ENCODE measurements at regions of chr16 and their contacts with region 1.

Region 1: DNA sequence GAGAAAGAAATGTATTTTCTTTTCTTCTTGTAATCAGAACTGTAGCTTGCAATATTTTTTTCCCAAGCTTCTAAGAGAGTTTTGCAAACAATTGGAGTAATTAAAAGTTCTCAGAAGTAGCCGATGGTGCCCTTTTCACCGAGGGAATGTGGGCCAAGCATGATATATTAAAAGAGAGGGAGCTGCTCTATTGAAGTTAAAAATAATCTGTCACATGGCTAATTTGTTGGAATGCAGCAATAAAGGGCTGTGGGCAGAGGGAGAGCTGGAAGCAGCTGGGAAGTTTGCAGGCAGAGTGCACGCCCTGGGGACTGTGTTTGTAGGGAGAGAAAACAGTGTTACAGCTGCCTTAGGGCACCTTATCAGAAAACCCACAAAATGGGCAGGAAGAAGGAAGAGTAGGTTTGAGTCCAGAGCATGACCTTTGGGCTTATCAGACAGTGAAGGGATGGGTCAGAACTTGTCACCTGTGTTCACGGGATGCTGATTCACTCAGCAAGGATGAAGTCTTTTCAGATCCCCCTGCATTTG is 18.5 kb upstream of the TERF2 start:
- H3K4me3 Mint-ChIP-seq: no peak overlapping the region
- H3K27ac Mint-ChIP-seq: no peak overlapping the region
- H3K4me1 Mint-ChIP-seq: peaks cover 23% of the 10 kb centered on the region
- H3K27me3 Mint-ChIP-seq: peaks cover 43% of the 10 kb centered on the region

Region 2: GRCh38 chr16:69019811-69020210 is 384.5 kb before region 1 on chr16:
- intact Hi-C with region 1: no loop called
- H3K4me3 Mint-ChIP-seq: no peak overlapping the region
- H3K27ac Mint-ChIP-seq: no peak overlapping the region
- H3K4me1 Mint-ChIP-seq: peaks cover 8% of the 10 kb centered on the region
- H3K27me3 Mint-ChIP-seq: no peaks in the 10 kb centered on the region

Region 3: DNA sequence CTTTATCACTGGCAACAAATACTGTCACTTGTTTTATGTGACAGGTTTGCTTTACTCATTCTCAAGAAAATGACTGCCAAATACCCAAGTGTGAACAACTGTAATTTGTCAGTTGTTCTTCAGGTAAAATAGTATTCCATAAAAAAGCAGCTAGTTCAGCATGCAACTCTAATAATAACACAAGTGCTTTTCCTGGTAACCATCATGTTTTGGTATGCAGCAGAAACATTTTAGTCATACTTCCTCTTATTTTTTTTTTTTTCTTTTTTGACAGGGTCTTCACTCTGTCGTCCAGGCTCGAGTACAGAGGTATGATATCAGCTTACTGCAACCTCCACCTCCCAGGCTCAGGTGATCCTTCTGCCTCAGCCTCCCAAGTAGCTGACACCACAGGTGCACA is 23.1 kb before region 1 on chr16:
- intact Hi-C with region 1: no loop called
- H3K4me3 Mint-ChIP-seq: peak overlapping the region; percentile 54
- H3K27ac Mint-ChIP-seq: peak overlapping the region; percentile 89
- H3K4me1 Mint-ChIP-seq: peaks cover 32% of the 10 kb centered on the region
- H3K27me3 Mint-ChIP-seq: no peaks in the 10 kb centered on the region

Region 4: DNA sequence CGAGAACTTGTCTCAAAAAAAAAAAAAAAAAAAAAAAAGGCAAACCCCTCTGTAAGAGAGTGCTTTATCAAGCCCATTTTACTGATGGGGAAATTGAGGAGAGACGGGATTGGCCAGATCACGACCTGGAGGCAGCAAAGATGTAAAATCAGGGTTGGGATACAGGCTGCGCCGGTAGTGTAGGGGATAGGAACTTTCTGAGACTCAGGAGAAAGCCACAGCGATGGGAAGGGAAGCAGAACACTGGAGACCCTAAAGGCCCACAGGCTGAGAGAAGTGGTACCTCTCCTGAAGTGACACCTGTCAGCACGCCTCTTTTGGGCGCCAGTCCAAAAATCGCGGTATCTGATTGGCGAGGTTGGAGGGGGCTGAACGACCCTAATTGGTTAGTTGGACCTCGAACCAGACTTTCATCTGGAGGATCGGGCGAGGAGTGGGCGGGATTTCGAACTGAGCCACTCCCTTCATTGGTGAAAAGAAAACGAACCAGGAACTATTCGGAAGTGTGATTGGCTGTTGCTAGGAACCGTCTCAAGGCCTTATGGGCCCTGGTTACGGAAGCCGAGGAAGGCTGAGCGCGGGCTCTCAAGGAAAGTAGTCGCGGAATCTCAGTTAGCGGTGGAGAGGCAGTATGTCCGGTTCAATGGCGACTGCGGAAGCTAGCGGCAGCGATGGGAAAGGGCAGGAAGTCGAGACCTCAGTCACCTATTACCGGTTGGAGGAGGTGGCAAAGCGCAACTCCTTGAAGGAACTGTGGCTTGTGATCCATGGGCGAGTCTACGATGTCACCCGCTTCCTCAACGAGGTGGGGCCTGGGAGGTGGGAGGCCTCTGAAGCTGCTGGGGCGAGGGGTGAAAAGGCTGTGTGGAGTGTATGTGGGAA is 20.0 kb after region 1 on chr16 and contains the start of gene CYB5B:
- intact Hi-C with region 1: loop called (anchors 1 kb)
- H3K4me3 Mint-ChIP-seq: peak within 1 kb of the TSS; percentile 99
- H3K27ac Mint-ChIP-seq: peak within 1 kb of the TSS; percentile 93
- H3K4me1 Mint-ChIP-seq: peaks cover 36% of the 10 kb centered on the region
- H3K27me3 Mint-ChIP-seq: no peaks in the 10 kb centered on the region

Region 5: DNA sequence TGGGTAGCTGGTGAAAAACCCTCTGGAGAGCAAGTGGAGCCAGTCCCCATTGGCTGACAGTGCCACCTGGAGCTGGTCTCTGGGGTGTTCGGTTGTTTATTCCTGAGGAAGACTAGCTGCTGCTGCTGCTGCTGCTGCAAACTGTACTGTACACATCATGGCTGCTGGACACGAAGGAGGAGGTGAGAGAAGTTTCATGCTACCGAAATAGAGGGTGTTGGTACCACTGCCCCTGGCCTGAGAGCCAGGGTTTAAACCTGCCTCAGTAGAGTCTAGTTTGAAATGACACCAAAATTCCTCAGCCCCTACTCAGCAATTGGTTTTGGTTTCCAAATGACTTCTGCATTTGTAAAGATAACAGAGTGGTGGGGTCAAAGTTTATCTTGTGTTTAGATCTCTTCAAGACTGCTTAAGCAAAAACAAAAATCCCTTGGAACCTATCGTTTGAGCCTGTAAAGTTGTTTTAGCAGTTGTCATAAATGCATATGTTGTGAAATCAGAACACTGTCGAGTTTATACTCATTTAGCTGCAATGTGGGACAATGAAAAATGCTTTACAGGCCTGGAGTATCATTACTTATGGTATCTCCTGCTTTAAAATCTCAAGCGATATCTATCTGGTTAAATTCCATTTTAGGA is 60.9 kb after region 1 on chr16:
- intact Hi-C with region 1: loop called (anchors 10 kb)
- H3K4me3 Mint-ChIP-seq: no peak overlapping the region
- H3K27ac Mint-ChIP-seq: no peak overlapping the region
- H3K4me1 Mint-ChIP-seq: peaks cover 34% of the 10 kb centered on the region
- H3K27me3 Mint-ChIP-seq: peaks cover 70% of the 10 kb centered on the region

Region 6: GRCh38 chr16:69494993-69495392 is 90.7 kb after region 1 on chr16:
- intact Hi-C with region 1: no loop called
- H3K4me3 Mint-ChIP-seq: no peak overlapping the region
- H3K27ac Mint-ChIP-seq: no peak overlapping the region
- H3K4me1 Mint-ChIP-seq: no peaks in the 10 kb centered on the region
- H3K27me3 Mint-ChIP-seq: peaks cover 83% of the 10 kb centered on the region

Measured in dendritic cell treated with granulocyte-macrophage colony-stimulating factor and Interleukin-4, amounts not matched to agents 40 ng/mL and 50 ng/mL, for 4 days (primary cell).